Posterior cingulate gyrus (tissue), 11 donors: ENCODE measurements at regions of chr15 and their contacts with region 1.

Region 1: DNA sequence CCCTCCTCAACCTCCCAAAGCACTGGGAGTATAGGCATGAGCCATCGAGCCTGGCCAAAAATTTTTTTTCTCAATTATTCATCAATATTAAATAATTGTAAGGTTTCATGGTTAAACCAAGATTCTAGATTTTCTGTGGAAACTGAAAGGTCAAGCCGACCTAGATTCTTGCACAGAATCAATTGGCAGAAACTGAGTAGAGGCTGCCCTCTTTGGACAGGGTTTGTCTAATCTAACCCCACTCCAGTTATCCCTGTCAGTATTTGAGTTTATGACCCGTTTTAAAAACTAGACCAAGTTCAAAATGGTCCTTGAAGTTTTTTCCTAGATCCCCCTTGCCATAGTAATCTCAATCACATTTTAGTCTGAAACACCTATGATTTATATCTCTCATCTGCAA is 8.6 kb upstream of the ADAM10 start:
- DNase-seq: peak in 1 of 10 donors; percentile 42

Region 2: GRCh38 chr15:58227706-58228543 is 530.2 kb before region 1 on chr15:
- intact Hi-C with region 1: loop called (anchors 2 kb)
- DNase-seq: peak; percentile 52 to 96 (median 78)

Region 3: DNA sequence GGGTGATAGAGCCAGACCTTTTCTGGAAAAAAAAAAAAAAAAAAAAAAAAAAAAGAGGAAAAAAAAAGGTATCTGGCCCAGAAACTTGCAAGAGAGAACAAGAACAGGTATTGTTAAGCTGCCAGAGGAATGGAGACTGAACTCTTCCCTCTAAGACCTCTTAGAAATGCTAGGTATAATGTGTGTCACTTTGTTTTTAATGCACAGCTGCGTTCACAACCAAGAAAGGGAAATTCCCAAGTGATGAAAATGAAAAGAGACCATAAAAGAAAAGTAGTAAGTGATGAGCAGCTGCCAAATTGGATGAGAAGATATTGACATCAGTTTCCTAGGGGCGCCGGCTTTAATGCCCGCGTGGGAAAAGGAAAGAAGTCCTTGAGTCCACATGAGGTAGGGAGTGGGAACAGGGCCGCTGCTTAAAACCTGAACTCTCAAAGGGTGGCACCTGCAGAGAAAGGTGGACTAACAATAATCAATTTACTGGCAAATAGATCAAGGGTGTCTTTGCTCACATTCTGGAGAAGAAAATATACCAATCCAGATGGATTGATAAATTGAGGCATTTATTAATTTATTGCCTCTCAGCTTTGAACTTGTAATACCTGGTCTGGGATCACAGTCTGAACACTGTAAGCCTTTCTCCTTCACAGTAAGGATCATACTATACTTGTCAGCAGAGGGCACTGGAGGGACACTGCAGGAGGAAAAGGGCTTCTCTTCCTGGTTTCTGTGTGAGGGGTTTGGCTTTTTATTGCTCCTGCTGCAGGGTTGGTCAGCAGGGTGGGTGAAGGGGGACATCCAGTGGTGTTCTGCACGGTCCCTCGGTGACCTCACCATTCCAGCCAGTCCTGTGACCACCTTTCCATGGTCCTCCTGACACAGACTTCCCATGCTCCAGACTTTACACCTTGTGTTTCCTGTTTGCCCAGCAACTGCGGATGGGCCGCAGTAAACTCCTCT is 488.4 kb before region 1 on chr15:
- intact Hi-C with region 1: loop called (anchors 5 kb)
- DNase-seq: peak in 4 of 10 donors; percentile 22 to 82 (median 37)

Region 4: DNA sequence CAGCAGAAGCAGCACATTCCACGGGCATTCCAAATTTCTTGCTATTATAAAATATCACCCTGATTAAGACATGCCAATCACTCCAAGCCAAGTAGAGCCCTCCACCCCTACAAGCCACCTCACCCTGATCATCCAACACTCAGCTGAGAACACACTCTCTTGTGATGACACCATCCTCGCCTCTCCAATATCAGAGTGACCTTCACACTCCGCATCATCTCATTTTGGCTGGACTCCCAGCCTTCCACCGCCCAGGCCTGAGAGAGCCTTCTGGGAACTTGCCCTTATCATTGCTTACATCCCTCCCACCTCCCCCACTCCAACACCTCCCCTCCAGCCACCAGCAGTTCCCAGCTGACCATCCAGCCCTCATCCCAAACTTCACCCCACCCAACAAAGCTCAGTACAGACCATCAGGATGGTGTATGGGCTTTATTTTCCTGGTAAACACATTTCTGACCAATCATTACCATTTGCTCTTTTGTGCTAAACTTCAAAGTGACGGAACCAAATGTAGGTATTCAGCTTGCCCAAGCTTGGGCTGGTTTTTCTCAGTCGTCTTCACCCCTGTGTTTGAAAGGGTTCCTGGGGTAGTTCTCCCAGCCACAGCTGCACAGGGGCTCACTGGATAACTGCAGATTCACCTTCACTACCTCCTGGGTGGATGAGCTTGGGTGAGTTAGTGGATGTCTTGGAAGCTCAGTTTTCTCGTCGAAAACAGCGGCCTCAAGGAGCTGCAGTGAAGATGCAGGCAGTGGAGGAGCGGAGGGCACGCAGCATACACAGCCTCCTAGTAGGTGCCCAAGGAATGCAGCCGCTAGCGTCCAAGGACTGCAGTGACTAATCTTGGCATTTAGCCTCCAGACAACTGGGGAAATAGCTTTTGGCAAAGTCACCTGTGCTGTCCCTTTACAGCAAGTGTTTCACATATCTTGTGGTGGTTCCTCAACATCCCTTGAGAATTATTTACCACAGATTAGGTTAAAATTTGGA is 211.2 kb before region 1 on chr15:
- intact Hi-C with region 1: no loop called
- DNase-seq: peak in 1 of 10 donors; percentile 77

Region 5: GRCh38 chr15:58671186-58671585 is 87.0 kb before region 1 on chr15:
- intact Hi-C with region 1: loop called (anchors 5 kb)
- DNase-seq: no peak

Region 6: GRCh38 chr15:58694641-58695398 is 63.3 kb before region 1 on chr15:
- intact Hi-C with region 1: no loop called
- DNase-seq: no peak

Region 7: GRCh38 chr15:58715266-58715917 is 42.7 kb before region 1 on chr15:
- intact Hi-C with region 1: no loop called
- DNase-seq: no peak

Region 8: DNA sequence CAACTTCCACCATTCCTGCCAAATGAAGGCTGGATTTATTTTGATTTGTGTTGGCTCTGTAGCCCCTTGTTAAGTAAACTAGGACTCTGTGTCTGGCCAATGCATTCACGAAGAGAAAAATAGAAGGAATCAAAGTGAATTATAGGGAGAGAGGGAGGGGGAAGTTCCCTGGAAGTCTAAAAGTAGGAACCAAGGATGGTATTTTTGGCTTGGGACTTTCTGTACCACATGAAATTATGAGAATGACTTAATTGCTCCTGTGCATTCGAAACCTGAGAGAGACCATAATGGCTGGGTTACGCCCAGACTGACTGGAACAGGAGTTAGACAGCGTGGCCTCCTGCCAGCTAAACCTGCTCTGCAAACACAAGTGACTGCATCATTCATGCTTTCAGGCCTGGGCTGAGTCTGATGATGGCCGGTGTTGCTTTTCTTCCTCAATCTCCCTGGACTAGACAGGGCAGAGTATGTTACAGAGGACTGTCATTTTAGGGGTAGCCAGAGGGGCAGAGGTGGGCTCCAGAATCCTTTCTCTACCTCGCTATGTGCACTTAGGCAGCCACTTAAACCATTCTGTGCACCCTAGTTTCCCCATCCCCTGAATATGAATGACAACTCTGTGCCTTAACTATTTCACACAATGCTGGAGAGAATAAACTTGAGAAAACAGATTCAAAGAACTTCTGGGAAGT is 555.6 kb after region 1 on chr15:
- intact Hi-C with region 1: no loop called
- DNase-seq: peak in 6 of 10 donors; percentile 32 to 88 (median 47)